ENCODE measurements at regions of chr11 and their contacts with region 1.

Region 1: GRCh38 chr11:35391922-35392813 is 27.2 kb downstream of the SLC1A2 start:
- DNase-seq: peak; percentile 87
- ATAC-seq: peak; percentile 64

Region 2: DNA sequence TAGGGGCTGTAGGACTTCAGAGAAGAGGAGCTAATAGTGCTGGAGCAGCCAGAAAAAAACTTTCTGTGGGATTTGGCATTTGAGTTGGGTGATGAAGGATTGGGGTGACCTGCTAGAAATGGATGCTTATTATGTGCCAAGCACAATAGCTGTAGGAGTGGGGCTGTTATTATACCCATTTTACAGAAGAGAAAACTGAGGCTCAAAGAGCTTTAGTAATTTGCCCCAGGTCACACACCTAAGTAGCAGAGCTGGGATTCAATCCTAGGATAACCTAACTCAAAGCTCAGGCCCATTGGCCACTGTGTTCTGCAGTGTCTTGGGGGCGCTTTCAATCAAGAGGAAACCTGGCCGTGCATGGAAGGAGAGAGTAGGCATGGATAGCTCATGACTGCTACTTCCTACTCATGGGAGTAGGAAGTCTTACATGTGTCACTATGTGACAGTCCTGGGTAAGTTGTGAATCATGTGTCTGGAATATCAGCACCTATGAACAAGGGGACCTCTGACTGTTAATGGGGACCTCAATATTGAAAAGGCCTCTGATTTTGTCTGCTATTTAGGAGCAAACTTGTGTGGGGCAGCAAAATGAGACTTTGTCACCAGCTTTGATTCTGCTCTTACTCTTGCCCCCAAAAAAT is 872.5 kb before region 1 on chr11:
- intact Hi-C with region 1: loop called (anchors 5 kb)
- DNase-seq: no peak
- ATAC-seq: no peak

Region 3: DNA sequence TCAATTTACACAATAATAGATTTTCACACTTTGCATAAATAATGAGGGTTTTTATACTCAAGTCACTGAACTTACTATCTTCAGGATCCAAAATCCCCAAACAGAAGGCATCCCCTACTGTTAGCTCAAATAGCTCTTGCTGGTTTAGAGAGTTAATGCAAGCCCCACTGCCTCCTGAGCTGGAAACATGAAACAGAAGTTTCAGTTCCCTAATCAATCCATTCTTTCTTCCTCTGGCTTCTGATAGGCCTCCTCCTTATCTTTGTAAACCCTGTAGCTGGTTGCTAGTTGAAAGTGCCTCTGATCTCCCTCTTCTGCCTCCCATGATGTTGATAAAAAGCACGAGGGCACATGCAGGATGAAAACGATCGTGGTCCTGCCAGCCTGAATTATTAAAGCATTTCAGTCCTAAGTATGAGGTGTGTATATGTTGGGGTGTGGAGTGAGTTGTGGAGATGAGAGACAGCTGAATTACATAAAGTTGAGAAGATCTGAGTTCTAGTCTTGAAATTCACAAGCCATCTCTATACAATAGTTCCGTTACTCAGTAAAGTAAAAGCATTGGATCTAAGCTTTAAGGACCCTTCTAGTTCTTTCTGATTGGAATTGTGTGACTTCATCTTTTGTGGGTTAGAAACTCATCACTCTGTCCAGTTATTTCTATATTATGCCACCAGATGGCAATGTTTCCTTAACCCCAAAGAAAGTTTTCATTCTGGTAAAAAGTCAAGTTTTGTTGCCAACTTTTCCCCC is 806.3 kb before region 1 on chr11:
- intact Hi-C with region 1: loop called (anchors 5 kb)
- DNase-seq: no peak
- ATAC-seq: peak; percentile 57

Region 4: GRCh38 chr11:34926101-34926830 is 465.9 kb before region 1 on chr11:
- intact Hi-C with region 1: loop called (anchors 2 kb)
- DNase-seq: no peak
- ATAC-seq: peak; percentile 52

Region 5: DNA sequence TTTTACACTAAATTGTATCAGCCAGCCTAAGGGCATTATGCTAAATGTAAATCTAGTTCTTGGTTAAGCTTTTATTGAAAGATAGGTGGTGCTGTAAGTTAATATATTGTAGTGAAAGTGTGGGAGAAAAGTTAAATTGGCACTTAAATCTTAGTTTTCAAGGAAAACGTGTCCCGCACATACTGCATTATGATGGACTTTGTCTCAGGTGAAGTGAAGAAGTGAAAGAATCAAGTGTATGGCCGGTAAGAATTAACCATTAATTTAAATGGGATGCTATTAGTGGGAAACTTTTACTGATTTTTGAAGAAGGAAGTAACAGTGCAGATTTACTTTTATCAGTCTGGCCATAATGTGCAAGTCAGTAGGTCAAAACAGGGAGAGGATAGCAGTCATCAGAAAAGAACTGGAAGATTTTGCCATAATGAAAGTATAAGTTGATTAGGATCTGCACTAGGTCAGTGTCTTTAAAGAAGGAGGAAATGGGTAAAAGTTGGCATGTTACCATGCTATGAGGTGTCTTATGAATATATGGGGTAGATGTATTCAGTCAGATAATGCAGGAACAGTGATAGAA is 394.1 kb before region 1 on chr11:
- intact Hi-C with region 1: loop called (anchors 5 kb)
- DNase-seq: no peak
- ATAC-seq: no peak

Region 6: DNA sequence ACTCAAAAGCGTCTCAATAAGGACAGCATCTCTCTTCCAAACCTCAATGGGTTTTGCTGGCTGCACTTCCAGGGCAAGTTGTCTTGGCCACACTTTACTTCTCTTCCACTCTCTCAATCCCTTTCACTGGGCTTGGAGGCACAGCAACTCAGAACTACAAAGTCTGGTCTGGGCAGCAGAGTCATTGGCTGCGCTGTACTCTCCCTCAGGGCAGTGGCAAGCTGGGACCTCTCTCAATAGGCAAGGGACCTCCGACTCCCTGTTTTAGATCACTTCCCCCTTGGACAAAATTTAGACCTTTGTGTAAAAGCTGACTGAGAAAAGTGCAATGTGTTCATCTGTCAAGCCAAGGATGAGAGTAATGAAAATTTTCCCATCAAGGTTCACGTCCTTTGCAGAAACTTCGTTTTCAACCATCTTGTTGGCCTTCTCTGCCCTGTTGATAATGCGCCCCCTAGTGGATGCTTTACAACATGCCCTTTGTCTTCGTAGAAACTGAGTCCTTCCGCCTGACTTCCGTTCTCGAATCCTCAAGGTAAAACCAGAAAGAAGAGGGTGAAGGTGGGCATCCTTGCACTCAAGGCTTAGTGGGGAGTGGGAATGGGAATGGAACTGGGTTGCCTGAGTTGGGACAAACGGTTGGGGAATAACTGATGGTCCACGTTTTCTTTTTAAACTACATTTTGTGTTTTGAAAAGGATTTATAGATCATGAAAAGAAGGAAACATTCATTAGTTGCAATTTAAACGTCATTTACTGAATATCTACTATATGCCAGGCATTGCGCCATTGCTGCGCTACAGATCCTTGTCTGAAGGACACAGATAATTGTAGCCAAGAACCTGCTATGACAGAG is 154.1 kb before region 1 on chr11:
- intact Hi-C with region 1: loop called (anchors 5 kb)
- DNase-seq: no peak
- ATAC-seq: peak; percentile 23

Region 7: GRCh38 chr11:35272391-35272902 is 119.7 kb before region 1 on chr11:
- intact Hi-C with region 1: loop called (anchors 10 kb)
- DNase-seq: no peak
- ATAC-seq: no peak

Region 8: GRCh38 chr11:35584321-35584720 is 192.2 kb after region 1 on chr11:
- intact Hi-C with region 1: no loop called
- DNase-seq: no peak
- ATAC-seq: no peak